IMR-90 (cell line): ENCODE measurements at regions of chr2 and their contacts with region 1.

Region 1: GRCh38 chr2:142989273-142990204 is 112.1 kb downstream of the KYNU start:
- DNase-seq: peak; percentile 71
- ATAC-seq: peak; percentile 80
- H3K4me3 ChIP-seq: no peak overlapping the region
- H3K27ac ChIP-seq: no peak overlapping the region
- H3K4me1 ChIP-seq: no peaks in the 10 kb centered on the region
- H3K27me3 ChIP-seq: no peaks in the 10 kb centered on the region
- CTCF ChIP-seq: peak; percentile 63
- POLR2A ChIP-seq: no peak
- RAD21 ChIP-seq: peak; percentile 72

Region 2: GRCh38 chr2:141582213-141582612 is 1407.3 kb before region 1 on chr2:
- CTCF ChIA-PET with region 1: no interaction called
- POLR2A ChIA-PET with region 1: no interaction called
- dilution Hi-C with region 1: no loop called
- in situ Hi-C with region 1: no loop called
- intact Hi-C with region 1: loop called (anchors 5 kb)
- DNase-seq: no peak
- ATAC-seq: no peak
- H3K4me3 ChIP-seq: no peak overlapping the region
- H3K27ac ChIP-seq: no peak overlapping the region
- H3K4me1 ChIP-seq: no peaks in the 10 kb centered on the region
- H3K27me3 ChIP-seq: no peaks in the 10 kb centered on the region
- CTCF ChIP-seq: no peak
- POLR2A ChIP-seq: no peak
- RAD21 ChIP-seq: no peak

Region 3: DNA sequence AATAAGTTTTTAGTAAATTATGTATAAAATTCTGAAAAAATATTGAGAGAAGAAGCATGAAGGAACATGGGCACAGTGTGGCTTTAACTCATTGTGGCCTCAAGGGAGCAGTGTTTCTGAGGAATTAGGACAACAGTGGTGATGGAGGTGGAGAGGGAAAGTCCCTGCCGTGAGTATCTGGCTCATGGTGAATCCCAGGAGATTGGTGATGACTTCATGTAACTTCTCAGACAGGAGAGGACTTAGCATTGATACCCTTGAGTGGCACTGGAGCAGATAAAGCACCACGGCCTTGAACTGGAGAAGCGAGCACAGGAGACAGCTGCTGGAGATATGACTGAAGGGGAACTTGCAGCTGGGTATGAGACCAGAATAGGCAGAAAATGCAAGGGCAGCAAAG is 823.7 kb before region 1 on chr2:
- CTCF ChIA-PET with region 1: no interaction called
- POLR2A ChIA-PET with region 1: no interaction called
- dilution Hi-C with region 1: no loop called
- in situ Hi-C with region 1: no loop called
- intact Hi-C with region 1: loop called (anchors 5 kb)
- DNase-seq: peak; percentile 65
- ATAC-seq: peak; percentile 80
- H3K4me3 ChIP-seq: no peak overlapping the region
- H3K27ac ChIP-seq: no peak overlapping the region
- H3K4me1 ChIP-seq: no peaks in the 10 kb centered on the region
- H3K27me3 ChIP-seq: no peaks in the 10 kb centered on the region
- CTCF ChIP-seq: peak; percentile 57
- POLR2A ChIP-seq: no peak
- RAD21 ChIP-seq: peak; percentile 67

Region 4: DNA sequence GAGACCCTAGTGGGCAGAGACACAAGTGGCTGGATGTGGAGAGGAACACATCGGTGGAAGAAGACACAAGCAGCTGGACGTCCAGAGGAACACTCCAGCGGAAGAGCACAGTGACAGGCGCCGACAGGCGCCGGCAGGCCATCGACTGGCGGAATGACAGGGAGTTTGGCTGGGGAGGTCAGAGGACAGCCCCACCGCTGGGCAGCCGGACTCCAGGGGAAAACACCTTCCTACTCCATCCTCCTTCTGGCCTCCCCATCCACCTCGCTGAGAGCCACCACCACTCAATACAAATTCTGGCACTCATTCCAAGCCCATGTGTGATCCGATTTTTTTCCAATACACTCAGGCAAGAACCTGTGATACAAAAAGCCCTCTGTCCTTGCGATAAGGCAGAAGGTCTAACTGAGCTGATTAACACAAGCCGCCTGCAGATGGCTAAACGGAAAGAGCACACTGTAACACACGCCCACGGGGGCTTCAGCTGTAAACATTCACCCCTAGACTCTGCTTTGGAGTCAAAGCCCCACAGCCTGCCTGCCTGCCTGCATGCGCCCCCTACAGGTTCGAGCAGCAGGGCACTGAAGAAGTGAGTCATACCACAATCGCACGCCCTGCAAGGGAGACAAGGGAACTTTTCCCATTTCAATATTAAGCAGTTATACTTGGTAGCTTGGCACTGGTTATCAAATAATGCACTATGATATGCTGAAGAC is 808.6 kb before region 1 on chr2:
- CTCF ChIA-PET with region 1: no interaction called
- POLR2A ChIA-PET with region 1: no interaction called
- dilution Hi-C with region 1: no loop called
- in situ Hi-C with region 1: loop called (anchors 10 kb)
- intact Hi-C with region 1: no loop called
- DNase-seq: peak; percentile 12
- ATAC-seq: no peak
- H3K4me3 ChIP-seq: no peak overlapping the region
- H3K27ac ChIP-seq: no peak overlapping the region
- H3K4me1 ChIP-seq: peaks cover 2% of the 10 kb centered on the region; the same call in 1 of the 2 replicates
- H3K27me3 ChIP-seq: no peaks in the 10 kb centered on the region
- CTCF ChIP-seq: peak; percentile 42
- POLR2A ChIP-seq: no peak
- RAD21 ChIP-seq: no peak

Region 5: DNA sequence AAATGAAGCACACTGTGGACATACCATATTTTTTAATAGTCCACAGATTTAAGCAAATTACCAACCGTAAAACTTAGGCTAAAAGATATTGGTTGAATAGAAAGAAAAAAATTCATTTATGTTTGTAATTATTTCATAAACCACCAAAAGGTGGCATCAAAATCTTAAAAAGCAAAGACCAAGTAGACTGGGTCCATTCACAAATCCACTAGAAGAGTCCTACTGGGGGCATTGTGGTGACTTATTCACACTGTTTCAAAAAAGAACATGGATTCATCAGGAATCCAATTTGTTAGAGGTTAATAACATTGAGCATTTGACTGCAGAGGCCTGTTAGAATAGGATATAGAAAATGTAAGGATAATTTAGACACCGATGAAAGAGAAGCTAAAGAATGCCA is 307.0 kb before region 1 on chr2:
- CTCF ChIA-PET with region 1: interaction called, 6 read pairs
- POLR2A ChIA-PET with region 1: no interaction called
- dilution Hi-C with region 1: no loop called
- in situ Hi-C with region 1: loop called (anchors 5 kb)
- intact Hi-C with region 1: loop called (anchors 2 kb)
- DNase-seq: peak; percentile 45
- ATAC-seq: peak; percentile 49
- H3K4me3 ChIP-seq: no peak overlapping the region
- H3K27ac ChIP-seq: no peak overlapping the region
- H3K4me1 ChIP-seq: peaks cover 2% of the 10 kb centered on the region; the same call in 1 of the 2 replicates
- H3K27me3 ChIP-seq: no peaks in the 10 kb centered on the region
- CTCF ChIP-seq: peak; percentile 51
- POLR2A ChIP-seq: no peak
- RAD21 ChIP-seq: peak; percentile 60

Region 6: DNA sequence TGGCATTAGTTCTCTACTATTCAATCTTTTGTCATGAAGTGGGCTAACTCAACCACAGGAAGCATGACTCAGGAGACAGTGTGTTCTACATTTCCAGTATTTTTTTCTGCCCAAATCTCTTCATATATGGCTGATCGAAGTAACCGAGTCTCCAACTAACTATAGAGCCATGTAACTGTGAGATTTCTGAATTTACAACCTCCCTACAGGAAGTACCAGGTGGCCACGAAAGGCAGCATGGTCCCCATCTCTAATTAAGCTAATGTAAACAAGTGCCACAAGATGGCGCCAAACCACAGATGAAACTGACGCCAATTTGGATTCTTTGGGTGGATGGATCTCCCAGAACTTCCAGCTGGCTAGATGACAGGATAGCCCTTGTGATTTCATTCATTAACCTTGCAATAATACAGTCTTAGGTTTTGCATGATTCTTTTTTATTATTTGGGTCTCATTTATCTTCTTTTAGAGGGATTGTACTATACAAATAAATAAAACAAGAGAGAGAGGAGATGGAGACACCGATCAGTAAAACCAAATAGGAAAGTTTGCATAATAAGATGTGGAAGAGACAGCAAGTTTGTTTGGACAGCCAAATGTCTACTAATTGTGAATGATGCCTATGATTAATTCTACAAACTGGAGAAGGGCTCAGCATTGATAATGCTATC is 121.4 kb after region 1 on chr2:
- CTCF ChIA-PET with region 1: no interaction called
- POLR2A ChIA-PET with region 1: no interaction called
- dilution Hi-C with region 1: no loop called
- in situ Hi-C with region 1: no loop called
- intact Hi-C with region 1: no loop called
- DNase-seq: peak; percentile 50
- ATAC-seq: peak; percentile 72
- H3K4me3 ChIP-seq: no peak overlapping the region
- H3K27ac ChIP-seq: no peak overlapping the region
- H3K4me1 ChIP-seq: no peaks in the 10 kb centered on the region
- H3K27me3 ChIP-seq: peaks cover 3% of the 10 kb centered on the region
- CTCF ChIP-seq: peak; percentile 55
- POLR2A ChIP-seq: no peak
- RAD21 ChIP-seq: peak; percentile 57